Activated naive CD4-positive, alpha-beta T cell treated with anti-CD3 and anti-CD28 coated beads for 36 hours (primary cell): ENCODE measurements at regions of chrX and their contacts with region 1.

Region 1: DNA sequence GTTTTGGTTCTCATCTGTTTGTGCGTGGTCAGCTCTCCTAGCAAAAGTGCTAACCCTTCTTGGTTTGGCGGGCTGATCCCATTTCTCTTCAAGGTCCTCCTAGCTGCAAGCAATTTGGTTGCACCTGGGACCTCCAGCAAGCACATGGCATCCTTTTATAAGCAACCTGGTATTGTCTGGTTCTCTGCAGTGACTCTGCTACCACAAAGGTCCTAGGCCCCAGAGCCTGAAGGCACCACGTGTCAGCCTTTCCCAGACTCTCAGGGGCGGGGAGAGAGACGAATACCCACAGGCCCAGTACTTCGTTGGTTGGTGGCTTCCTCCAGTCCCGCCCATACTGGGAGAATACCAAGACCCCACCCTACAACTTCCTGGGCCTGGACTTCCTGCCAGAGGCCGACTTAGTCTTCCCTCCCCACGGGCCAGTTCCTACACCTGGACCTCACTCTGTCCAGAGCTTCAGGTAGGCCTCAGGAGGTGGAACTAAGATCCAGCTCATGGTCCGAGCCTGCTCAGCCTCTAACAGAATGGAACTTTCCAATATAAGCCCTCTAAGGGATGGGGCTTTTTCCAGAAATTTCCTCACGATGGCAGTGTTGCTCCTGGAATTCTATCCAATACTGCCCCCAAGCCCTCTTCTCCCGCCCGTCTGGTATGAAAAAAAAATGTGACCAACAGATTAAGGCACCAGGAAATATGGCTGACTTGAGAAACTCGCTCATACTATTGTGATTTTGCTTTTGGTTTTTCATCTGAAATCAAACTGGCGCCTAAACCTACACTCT is 192.5 kb upstream of the STK26 start:
- DNase-seq: peak; percentile 85
- H3K4me3 Mint-ChIP-seq: peak overlapping the region; percentile 87
- H3K27ac Mint-ChIP-seq: peak overlapping the region; percentile 94
- H3K4me1 Mint-ChIP-seq: peaks cover 31% of the 10 kb centered on the region
- H3K27me3 Mint-ChIP-seq: no peaks in the 10 kb centered on the region

Region 2: GRCh38 chrX:131693359-131693758 is 137.2 kb before region 1 on chrX:
- CTCF ChIA-PET with region 1: no interaction called
- intact Hi-C with region 1: no loop called
- DNase-seq: no peak
- H3K4me3 Mint-ChIP-seq: no peak overlapping the region
- H3K27ac Mint-ChIP-seq: no peak overlapping the region
- H3K4me1 Mint-ChIP-seq: no peaks in the 10 kb centered on the region
- H3K27me3 Mint-ChIP-seq: no peaks in the 10 kb centered on the region

Region 3: GRCh38 chrX:131818297-131818936 is 12.2 kb before region 1 on chrX:
- CTCF ChIA-PET with region 1: interaction called, 10 read pairs
- intact Hi-C with region 1: loop called (anchors 1 kb)
- DNase-seq: no peak
- H3K4me3 Mint-ChIP-seq: no peak overlapping the region
- H3K27ac Mint-ChIP-seq: peak overlapping the region; percentile 68
- H3K4me1 Mint-ChIP-seq: peaks cover 45% of the 10 kb centered on the region
- H3K27me3 Mint-ChIP-seq: no peaks in the 10 kb centered on the region

Region 4: DNA sequence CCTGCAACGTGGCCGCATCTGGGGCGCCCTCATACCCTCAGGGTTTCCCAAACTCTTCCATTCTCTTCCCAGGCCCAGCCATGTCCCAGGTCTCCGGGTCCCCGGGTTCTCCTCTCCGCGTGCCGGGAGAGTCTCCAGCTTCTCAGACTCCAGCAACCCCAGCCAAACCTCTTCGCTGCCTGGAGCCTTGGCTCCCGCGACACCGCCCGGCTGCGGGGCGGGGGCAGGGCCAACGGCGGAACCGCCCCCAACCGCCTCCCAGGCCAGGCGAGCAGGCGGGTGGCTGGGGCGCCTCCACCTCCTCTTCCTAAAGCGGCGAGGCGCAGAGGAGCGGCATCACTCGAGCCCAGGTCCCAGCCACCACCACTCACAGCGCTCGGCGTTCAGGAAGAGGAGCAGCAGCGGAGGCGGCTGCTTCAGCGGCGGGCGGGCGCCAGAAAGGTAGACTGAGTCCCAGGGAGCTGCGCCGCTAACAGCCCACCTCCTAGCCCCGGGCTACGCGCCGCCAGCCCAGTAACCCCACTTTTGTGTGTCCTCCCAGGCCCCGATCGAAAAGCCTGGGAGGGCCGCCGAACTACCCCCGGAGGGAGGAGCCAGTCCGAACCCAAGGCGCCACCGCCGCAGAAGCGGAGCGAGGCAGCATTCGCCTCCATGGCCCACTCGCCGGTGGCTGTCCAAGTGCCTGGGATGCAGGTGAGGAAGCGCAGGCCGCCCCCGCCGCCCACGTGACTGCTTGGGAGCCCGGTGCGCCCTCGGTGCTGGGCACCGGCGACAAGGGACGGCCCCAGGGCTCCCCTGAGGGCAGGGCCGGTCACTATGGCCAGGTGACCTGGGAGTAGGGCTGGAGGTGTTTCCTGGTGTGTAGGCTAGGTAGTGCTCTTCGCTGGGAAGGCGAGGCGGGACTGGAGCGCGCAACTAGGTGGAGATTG is 192.6 kb after region 1 on chrX and contains the start of gene STK26:
- CTCF ChIA-PET with region 1: interaction called, 6 read pairs
- intact Hi-C with region 1: loop called (anchors 1 kb)
- DNase-seq: peak; percentile 80
- H3K4me3 Mint-ChIP-seq: peak within 1 kb of the TSS; percentile 91
- H3K27ac Mint-ChIP-seq: peak within 1 kb of the TSS; percentile 91
- H3K4me1 Mint-ChIP-seq: peaks cover 31% of the 10 kb centered on the region
- H3K27me3 Mint-ChIP-seq: no peaks in the 10 kb centered on the region
- total RNA-seq, gene STK26: 54.0 to 55.6 TPM

Region 5: GRCh38 chrX:132219343-132219768 is 388.8 kb after region 1 on chrX and contains the start of gene RAP2C:
- CTCF ChIA-PET with region 1: interaction called, 10 read pairs
- intact Hi-C with region 1: loop called (anchors 1 kb)
- DNase-seq: peak; percentile 76
- H3K4me3 Mint-ChIP-seq: peak within 1 kb of the TSS; percentile 74
- H3K27ac Mint-ChIP-seq: peak within 1 kb of the TSS; percentile 85
- H3K4me1 Mint-ChIP-seq: peaks cover 15% of the 10 kb centered on the region
- H3K27me3 Mint-ChIP-seq: no peaks in the 10 kb centered on the region
- total RNA-seq, gene RAP2C: 24.5 to 27.4 TPM

Region 6: DNA sequence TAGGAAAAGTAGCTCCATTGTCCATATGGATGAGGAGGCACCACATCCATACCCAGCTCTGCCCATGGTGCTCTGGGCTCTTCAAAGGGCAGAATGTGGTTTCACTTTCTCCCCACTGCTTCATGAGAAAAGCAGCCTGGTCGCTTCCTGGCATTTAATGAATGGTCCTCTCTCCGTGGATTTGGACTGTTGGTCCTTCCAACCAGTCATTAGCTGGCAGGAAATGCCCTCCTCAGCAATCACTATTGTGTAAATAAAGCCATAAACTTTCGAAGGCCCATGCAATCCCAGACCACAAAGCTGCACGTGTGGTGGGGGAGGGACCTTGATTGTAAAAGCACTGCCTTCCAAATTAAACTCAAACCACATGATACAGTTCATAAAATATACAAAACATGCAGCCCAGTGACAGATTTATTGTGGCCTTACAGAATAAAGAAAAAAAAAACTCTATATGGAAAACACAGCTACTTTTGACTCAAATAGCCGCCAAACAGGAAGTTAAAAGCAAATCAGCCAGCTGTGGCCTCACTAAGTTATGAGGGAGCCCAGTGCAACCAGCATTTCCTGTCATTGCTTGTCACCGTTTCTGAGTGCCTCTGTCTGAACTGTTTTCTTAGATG is 650.1 kb after region 1 on chrX:
- CTCF ChIA-PET with region 1: no interaction called
- intact Hi-C with region 1: loop called (anchors 2 kb)
- DNase-seq: peak; percentile 61
- H3K4me3 Mint-ChIP-seq: peak overlapping the region; percentile 75
- H3K27ac Mint-ChIP-seq: peak overlapping the region; percentile 96
- H3K4me1 Mint-ChIP-seq: peaks cover 44% of the 10 kb centered on the region
- H3K27me3 Mint-ChIP-seq: no peaks in the 10 kb centered on the region

Region 7: DNA sequence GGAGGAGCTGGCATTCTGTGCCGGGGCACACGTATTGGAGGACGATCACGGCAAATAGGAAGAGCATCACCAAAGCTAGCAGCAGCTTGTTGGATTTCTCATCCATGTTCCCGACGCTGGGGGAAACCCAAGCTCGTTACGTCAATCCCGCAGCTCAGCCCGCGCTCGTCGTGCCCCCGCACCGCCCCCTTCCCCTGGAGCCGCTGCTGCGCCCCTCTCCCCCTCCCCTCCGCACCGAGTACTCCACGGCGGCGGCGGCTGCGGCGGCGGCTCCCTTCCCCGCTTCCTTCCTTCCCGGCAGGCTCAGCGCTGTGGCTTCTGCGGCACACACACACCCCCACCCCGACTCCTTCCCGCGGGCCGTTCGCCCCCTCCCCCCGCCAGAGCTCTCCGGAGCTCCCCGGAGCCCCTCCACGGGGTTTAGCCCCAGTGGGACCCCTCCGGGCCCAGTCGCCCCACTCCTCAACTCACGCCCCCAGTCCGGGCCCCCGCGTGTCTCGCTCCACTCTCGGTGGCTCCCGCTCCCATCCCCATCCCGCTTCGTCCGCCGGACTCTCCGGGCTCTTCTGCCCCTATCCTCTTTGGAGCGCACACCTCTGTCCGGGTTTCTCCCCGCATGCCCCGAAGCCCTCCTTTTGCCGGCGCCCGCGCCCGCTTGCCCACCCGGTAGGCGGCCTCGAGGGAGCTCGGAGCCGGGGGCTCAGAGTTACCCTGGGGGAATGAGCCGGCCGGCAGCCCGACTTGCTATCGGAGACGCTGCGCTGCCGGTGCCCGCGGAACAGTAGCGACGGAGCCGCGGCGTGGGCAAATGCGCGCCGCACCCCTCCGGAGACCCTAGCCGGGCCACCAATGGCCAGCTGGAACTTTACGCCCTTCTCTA is 1126.9 kb after region 1 on chrX:
- CTCF ChIA-PET with region 1: no interaction called
- intact Hi-C with region 1: loop called (anchors 5 kb)
- DNase-seq: peak; percentile 38
- H3K4me3 Mint-ChIP-seq: peak overlapping the region; percentile 77
- H3K27ac Mint-ChIP-seq: no peak overlapping the region
- H3K4me1 Mint-ChIP-seq: peaks cover 2% of the 10 kb centered on the region
- H3K27me3 Mint-ChIP-seq: peaks cover 31% of the 10 kb centered on the region